ENCODE measurements at regions of chr19 and their contacts with region 1.

Region 1: GRCh38 chr19:1445185-1445931 is 4.6 kb upstream of the APC2 start:
- DNase-seq: peak; percentile 83
- H3K4me3 Mint-ChIP-seq: peak overlapping the region; percentile 62
- H3K27ac Mint-ChIP-seq: peak overlapping the region; percentile 11
- H3K4me1 Mint-ChIP-seq: peaks cover 44% of the 10 kb centered on the region
- H3K27me3 Mint-ChIP-seq: peaks cover 57% of the 10 kb centered on the region

Region 2: DNA sequence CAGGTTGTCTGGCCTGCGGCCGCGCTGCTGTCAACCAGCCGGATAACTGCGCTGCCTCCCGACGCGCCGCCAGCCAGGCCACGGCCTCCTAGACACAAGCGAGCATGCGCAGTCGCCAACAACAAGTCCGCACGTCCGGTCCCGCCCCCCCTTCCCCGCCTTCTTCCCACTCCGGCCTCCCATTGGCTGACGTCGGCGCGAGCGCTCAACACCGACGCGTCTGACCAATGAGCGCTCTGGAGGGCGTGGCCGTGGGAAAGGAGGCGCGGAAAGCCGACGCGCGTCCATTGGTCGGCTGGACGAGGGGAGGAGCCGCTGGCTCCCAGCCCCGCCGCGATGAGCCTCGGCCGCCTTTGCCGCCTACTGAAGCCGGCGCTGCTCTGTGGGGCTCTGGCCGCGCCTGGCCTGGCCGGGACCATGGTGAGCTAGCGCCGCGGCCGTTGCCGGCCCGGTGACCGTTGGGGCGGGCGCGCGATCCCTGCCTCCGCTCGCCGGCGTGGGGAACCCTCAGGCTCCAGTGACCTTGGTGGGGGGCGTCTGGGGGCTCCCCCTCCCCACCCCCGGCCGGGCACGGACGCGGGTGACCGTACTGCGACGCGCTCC is 341.5 kb before region 1 on chr19 and contains the start of gene GPX4:
- CTCF ChIA-PET with region 1: no interaction called
- DNase-seq: peak; percentile 99
- H3K4me3 Mint-ChIP-seq: peak within 1 kb of the TSS; percentile 73
- H3K27ac Mint-ChIP-seq: peak within 1 kb of the TSS; percentile 95
- H3K4me1 Mint-ChIP-seq: peaks cover 62% of the 10 kb centered on the region
- H3K27me3 Mint-ChIP-seq: no peaks in the 10 kb centered on the region

Region 3: GRCh38 chr19:1455336-1456120 is 10.2 kb after region 1 on chr19:
- CTCF ChIA-PET with region 1: interaction called, 10 read pairs
- DNase-seq: peak; percentile 73
- H3K4me3 Mint-ChIP-seq: no peak overlapping the region
- H3K27ac Mint-ChIP-seq: no peak overlapping the region
- H3K4me1 Mint-ChIP-seq: peaks cover 18% of the 10 kb centered on the region
- H3K27me3 Mint-ChIP-seq: peaks cover 95% of the 10 kb centered on the region

Region 4: DNA sequence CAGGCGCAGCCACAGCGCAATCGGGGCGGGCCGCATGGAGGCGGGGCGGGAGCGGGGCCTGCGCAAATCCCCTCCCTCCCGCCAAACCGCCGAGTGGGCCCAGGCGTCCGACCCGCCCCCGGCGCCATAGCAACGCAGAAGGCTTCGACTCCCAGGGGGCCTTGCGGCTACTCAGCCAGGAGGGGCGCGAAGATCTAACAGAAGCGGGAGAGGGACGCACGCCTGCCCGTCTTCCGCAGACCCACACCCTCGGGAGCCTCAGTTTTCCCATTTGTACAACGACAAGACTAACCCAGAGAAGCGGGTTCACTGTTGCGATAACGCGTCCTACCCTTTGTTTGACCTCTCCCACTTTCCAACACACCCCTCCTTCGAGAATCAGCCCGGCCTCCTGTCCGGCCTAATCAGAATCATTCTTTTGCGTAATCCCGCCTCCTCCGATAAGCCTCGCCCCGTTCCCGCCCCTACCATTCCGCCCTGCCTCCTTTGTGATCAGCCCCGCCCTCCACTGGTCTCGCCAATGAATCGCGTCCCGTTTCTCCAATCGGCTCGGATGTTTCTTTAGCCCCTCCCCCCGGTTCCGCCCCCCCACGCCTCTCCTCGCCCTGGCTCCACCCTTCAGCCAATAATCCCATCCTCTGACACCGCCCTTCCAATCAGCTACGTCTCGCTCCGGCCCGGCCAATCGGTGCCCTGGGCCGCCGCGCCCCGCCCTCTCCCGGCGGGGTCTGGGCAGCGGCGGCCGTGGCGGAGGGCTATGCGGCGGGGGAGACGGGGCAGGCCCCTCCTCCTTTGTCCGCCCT is 45.2 kb after region 1 on chr19 and contains the start of gene PCSK4:
- CTCF ChIA-PET with region 1: no interaction called
- DNase-seq: peak; percentile 98
- H3K4me3 Mint-ChIP-seq: peak within 1 kb of the TSS; percentile 85
- H3K27ac Mint-ChIP-seq: peak within 1 kb of the TSS; percentile 83
- H3K4me1 Mint-ChIP-seq: peaks cover 18% of the 10 kb centered on the region
- H3K27me3 Mint-ChIP-seq: peaks cover 38% of the 10 kb centered on the region

Region 5: DNA sequence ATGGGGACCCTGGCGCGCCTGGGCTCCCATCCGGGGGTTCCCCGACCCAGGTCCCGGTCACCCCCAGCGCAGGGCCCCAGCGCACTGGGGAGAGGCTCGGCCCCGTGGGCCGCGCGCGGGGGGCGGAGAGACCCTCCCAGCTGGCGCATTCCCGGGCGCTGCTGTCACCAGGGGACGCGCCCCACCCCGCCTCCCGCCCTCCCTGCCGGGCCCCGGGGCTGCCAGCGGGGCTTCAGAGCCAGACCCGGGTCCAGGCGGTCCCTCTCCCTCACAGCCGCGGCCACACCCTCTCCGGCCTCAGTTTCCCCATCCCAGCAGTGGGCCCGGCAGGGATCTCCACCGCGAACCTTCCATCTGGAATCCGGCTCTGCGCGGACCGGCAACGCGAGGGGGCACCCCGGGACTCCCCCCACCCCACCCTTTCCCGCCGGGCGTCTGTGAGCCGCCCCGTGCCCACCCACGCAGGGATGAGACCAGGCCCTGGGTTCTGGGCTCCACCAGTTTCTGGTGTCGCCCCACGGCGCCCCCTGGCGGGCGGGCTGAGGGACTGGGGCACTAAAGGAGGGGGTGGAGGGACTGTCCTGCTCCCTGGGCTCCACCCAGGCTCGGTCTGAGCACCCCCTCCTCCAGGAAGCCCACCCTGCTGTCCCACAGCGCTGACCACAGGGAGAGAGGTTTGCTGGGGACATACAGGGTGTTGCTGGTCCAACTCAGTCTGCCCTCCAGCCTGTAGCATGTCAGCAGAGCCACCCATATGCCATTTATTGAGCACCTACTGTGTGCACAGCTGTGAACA is 68.3 kb after region 1 on chr19:
- CTCF ChIA-PET with region 1: no interaction called
- DNase-seq: peak; percentile 77
- H3K4me3 Mint-ChIP-seq: peak overlapping the region; percentile 26
- H3K27ac Mint-ChIP-seq: no peak overlapping the region
- H3K4me1 Mint-ChIP-seq: peaks cover 8% of the 10 kb centered on the region
- H3K27me3 Mint-ChIP-seq: peaks cover 83% of the 10 kb centered on the region